ENCODE measurements at regions of chr10 and their contacts with region 1.

Region 1: DNA sequence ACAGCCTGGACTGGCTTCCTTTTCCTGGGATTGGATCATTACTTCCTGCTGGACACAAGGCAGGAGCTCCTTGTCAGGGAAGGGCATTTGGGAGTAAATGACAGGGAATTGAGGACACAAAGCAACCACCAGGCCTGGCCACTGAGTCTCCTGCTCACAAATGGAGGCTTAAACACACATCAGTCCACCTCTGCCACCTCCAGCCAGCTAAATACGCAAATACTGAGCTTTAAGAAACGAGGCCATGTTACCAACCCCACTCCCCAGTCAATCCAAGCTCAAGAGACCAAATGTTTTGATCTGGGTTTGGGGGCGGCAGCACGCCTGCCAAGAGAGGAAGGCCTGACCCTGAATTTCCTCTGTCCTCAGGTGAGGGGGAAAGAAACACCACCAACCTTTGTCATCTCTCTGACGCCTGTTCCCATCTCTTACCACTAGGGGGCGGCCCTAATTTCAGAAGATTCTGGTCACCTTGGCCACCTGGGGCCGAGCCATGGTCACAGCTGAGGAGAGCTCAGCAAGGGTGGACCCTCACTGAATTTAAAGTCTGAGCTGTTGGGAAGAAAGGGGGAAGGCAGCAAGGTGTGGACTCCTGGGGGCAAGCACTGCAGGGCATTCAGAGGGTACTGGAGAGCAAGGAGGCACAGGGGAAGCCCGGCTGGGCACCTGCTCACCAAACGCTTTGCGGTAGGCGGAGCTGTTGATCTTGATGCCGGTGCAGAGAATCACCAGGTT is 16.5 kb downstream of the AIFM2 start:
- DNase-seq: peak; percentile 69
- H3K4me3 Mint-ChIP-seq: no peak overlapping the region
- H3K27ac Mint-ChIP-seq: no peak overlapping the region
- H3K4me1 Mint-ChIP-seq: peaks cover 4% of the 10 kb centered on the region
- H3K27me3 Mint-ChIP-seq: no peaks in the 10 kb centered on the region

Region 2: GRCh38 chr10:70093335-70093944 is 22.7 kb before region 1 on chr10:
- CTCF ChIA-PET with region 1: interaction called, 31 read pairs
- POLR2A ChIA-PET with region 1: no interaction called
- intact Hi-C with region 1: no loop called
- DNase-seq: peak; percentile 51
- H3K4me3 Mint-ChIP-seq: peak overlapping the region; percentile 58
- H3K27ac Mint-ChIP-seq: peak overlapping the region; percentile 7
- H3K4me1 Mint-ChIP-seq: peaks cover 34% of the 10 kb centered on the region
- H3K27me3 Mint-ChIP-seq: no peaks in the 10 kb centered on the region

Region 3: GRCh38 chr10:70101668-70102067 is 14.4 kb before region 1 on chr10:
- CTCF ChIA-PET with region 1: interaction called, 58 read pairs
- POLR2A ChIA-PET with region 1: no interaction called
- intact Hi-C with region 1: no loop called
- DNase-seq: no peak
- H3K4me3 Mint-ChIP-seq: no peak overlapping the region
- H3K27ac Mint-ChIP-seq: no peak overlapping the region
- H3K4me1 Mint-ChIP-seq: no peaks in the 10 kb centered on the region
- H3K27me3 Mint-ChIP-seq: no peaks in the 10 kb centered on the region

Region 4: GRCh38 chr10:70132098-70133029 is 16.2 kb after region 1 on chr10 and contains the start of gene AIFM2:
- CTCF ChIA-PET with region 1: interaction called, 24 read pairs
- POLR2A ChIA-PET with region 1: no interaction called
- intact Hi-C with region 1: no loop called
- DNase-seq: peak; percentile 54
- H3K4me3 Mint-ChIP-seq: peak within 1 kb of the TSS; percentile 77
- H3K27ac Mint-ChIP-seq: no peak within 1 kb of the TSS
- H3K4me1 Mint-ChIP-seq: peaks cover 17% of the 10 kb centered on the region
- H3K27me3 Mint-ChIP-seq: no peaks in the 10 kb centered on the region
- total RNA-seq, gene AIFM2: 5.3 to 7.1 TPM

Region 5: DNA sequence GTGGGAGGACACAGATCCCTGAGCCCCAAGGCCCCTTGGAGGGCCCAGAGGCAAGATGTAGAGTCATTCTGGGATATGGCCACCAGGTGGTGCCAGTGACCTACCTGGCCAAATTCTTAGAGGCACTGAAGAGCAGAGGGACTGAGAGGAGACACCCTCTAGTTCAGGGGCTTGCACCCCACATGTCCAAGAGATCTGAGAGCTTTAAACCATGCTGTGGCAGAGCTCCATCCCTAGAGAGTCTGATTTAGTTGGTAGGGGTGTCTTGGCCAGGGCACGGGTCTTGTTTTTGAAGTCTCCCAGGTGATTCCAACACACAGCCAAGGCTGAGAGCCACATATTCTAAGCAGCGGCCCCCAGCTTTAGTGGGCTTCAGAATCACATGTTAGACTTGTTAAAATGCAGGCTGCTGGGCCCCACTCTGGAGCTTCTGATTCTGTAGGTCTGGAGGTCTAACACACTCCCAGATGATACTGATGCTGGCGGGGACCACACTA is 433.9 kb after region 1 on chr10:
- CTCF ChIA-PET with region 1: no interaction called
- POLR2A ChIA-PET with region 1: no interaction called
- intact Hi-C with region 1: no loop called
- DNase-seq: peak; percentile 82
- H3K4me3 Mint-ChIP-seq: no peak overlapping the region
- H3K27ac Mint-ChIP-seq: no peak overlapping the region
- H3K4me1 Mint-ChIP-seq: no peaks in the 10 kb centered on the region
- H3K27me3 Mint-ChIP-seq: no peaks in the 10 kb centered on the region

Measured in activated CD4-positive, alpha-beta memory T cell treated with anti-CD3 and anti-CD28 coated beads for 36 hours (primary cell).